ENCODE measurements at regions of chr1 and their contacts with region 1.

Region 1: GRCh38 chr1:151399890-151400495 is 620 bp downstream of the PSMB4 start:
- DNase-seq: no peak
- ATAC-seq: peak; percentile 3
- H3K4me3 Mint-ChIP-seq: peak overlapping the region; percentile 89
- H3K27ac Mint-ChIP-seq: peak overlapping the region; percentile 98
- H3K4me1 Mint-ChIP-seq: peaks cover 31% of the 10 kb centered on the region
- H3K27me3 Mint-ChIP-seq: no peaks in the 10 kb centered on the region
- CTCF ChIP-seq: no peak

Region 2: GRCh38 chr1:150772326-150772725 is 627.7 kb before region 1 on chr1:
- CTCF ChIA-PET with region 1: no interaction called
- POLR2A ChIA-PET with region 1: no interaction called
- intact Hi-C with region 1: no loop called
- DNase-seq: no peak
- ATAC-seq: no peak
- H3K4me3 Mint-ChIP-seq: no peak overlapping the region
- H3K27ac Mint-ChIP-seq: no peak overlapping the region
- H3K4me1 Mint-ChIP-seq: peaks cover 14% of the 10 kb centered on the region
- H3K27me3 Mint-ChIP-seq: no peaks in the 10 kb centered on the region
- CTCF ChIP-seq: no peak

Region 3: GRCh38 chr1:151281969-151282882 is 117.8 kb before region 1 on chr1 and contains the start of gene ZNF687:
- CTCF ChIA-PET with region 1: no interaction called
- POLR2A ChIA-PET with region 1: interaction called, 11 read pairs
- intact Hi-C with region 1: loop called (anchors 1 kb)
- DNase-seq: peak; percentile 96
- ATAC-seq: peak; percentile 88
- H3K4me3 Mint-ChIP-seq: peak within 1 kb of the TSS; percentile 99
- H3K27ac Mint-ChIP-seq: peak within 1 kb of the TSS; percentile 99
- H3K4me1 Mint-ChIP-seq: peaks cover 54% of the 10 kb centered on the region
- H3K27me3 Mint-ChIP-seq: no peaks in the 10 kb centered on the region
- CTCF ChIP-seq: no peak
- total RNA-seq, gene ZNF687: 38.8 and 40.3 TPM in 2 replicates

Region 4: GRCh38 chr1:151692226-151692625 is 292.2 kb after region 1 on chr1:
- CTCF ChIA-PET with region 1: no interaction called
- POLR2A ChIA-PET with region 1: no interaction called
- intact Hi-C with region 1: no loop called
- DNase-seq: no peak
- ATAC-seq: no peak
- H3K4me3 Mint-ChIP-seq: no peak overlapping the region
- H3K27ac Mint-ChIP-seq: no peak overlapping the region
- H3K4me1 Mint-ChIP-seq: no peaks in the 10 kb centered on the region
- H3K27me3 Mint-ChIP-seq: no peaks in the 10 kb centered on the region
- CTCF ChIP-seq: no peak

Measured in activated B cell treated with CpG ODN at 0.5 μM for 24 hours (primary cell).